Activated CD8-positive, alpha-beta T cell treated with anti-CD3 and anti-CD28 coated beads, Interleukin-2, amount 10 ng/mL, durations not matched to agents 7 days and 5 days (primary cell): ENCODE measurements at regions of chr5 and their contacts with region 1.

Region 1: GRCh38 chr5:157948738-157949410 is 89.9 kb upstream of the CLINT1 start:
- DNase-seq: peak; percentile 85
- ATAC-seq: peak; percentile 99
- H3K4me3 Mint-ChIP-seq: peak overlapping the region; percentile 7
- H3K27ac Mint-ChIP-seq: peak overlapping the region; percentile 0
- H3K4me1 Mint-ChIP-seq: peaks cover 4% of the 10 kb centered on the region
- H3K27me3 Mint-ChIP-seq: peaks cover 9% of the 10 kb centered on the region

Region 2: GRCh38 chr5:157799578-157799977 is 149.3 kb before region 1 on chr5:
- CTCF ChIA-PET with region 1: interaction called, 12 read pairs
- POLR2A ChIA-PET with region 1: no interaction called
- DNase-seq: no peak
- ATAC-seq: no peak
- H3K4me3 Mint-ChIP-seq: no peak overlapping the region
- H3K27ac Mint-ChIP-seq: no peak overlapping the region
- H3K4me1 Mint-ChIP-seq: no peaks in the 10 kb centered on the region
- H3K27me3 Mint-ChIP-seq: no peaks in the 10 kb centered on the region

Region 3: GRCh38 chr5:157820593-157821252 is 128.2 kb before region 1 on chr5:
- CTCF ChIA-PET with region 1: interaction called, 94 read pairs
- POLR2A ChIA-PET with region 1: no interaction called
- DNase-seq: peak; percentile 49
- ATAC-seq: no peak
- H3K4me3 Mint-ChIP-seq: no peak overlapping the region
- H3K27ac Mint-ChIP-seq: no peak overlapping the region
- H3K4me1 Mint-ChIP-seq: peaks cover 23% of the 10 kb centered on the region
- H3K27me3 Mint-ChIP-seq: no peaks in the 10 kb centered on the region

Region 4: GRCh38 chr5:157917899-157918809 is 30.7 kb before region 1 on chr5:
- CTCF ChIA-PET with region 1: interaction called, 20 read pairs
- POLR2A ChIA-PET with region 1: no interaction called
- DNase-seq: peak; percentile 75
- ATAC-seq: peak; percentile 81
- H3K4me3 Mint-ChIP-seq: no peak overlapping the region
- H3K27ac Mint-ChIP-seq: peak overlapping the region; percentile 81
- H3K4me1 Mint-ChIP-seq: peaks cover 29% of the 10 kb centered on the region
- H3K27me3 Mint-ChIP-seq: no peaks in the 10 kb centered on the region

Region 5: DNA sequence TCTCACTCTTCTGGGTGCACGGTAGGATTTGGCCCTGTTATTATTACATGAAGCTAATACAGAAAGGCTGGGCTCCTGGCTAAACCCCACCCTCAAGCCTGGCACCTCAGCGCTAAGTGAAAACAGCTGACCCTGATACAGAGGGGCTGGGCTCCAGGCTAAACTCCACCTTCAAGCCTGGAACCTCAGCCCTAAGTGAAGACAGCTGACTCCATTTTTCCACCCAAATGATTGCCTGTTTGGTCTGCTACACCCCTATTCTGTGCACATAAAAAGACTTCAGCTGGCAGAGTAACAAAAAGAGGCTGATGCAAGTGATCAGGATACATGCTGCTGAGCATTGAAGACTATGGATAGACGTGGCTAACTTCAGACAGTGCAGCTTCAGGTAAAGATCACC is 58.5 kb after region 1 on chr5:
- CTCF ChIA-PET with region 1: no interaction called
- POLR2A ChIA-PET with region 1: no interaction called
- DNase-seq: no peak
- ATAC-seq: no peak
- H3K4me3 Mint-ChIP-seq: no peak overlapping the region
- H3K27ac Mint-ChIP-seq: no peak overlapping the region
- H3K4me1 Mint-ChIP-seq: no peaks in the 10 kb centered on the region
- H3K27me3 Mint-ChIP-seq: peaks cover 15% of the 10 kb centered on the region